ENCODE measurements at regions of chr14 and their contacts with region 1.

Region 1: DNA sequence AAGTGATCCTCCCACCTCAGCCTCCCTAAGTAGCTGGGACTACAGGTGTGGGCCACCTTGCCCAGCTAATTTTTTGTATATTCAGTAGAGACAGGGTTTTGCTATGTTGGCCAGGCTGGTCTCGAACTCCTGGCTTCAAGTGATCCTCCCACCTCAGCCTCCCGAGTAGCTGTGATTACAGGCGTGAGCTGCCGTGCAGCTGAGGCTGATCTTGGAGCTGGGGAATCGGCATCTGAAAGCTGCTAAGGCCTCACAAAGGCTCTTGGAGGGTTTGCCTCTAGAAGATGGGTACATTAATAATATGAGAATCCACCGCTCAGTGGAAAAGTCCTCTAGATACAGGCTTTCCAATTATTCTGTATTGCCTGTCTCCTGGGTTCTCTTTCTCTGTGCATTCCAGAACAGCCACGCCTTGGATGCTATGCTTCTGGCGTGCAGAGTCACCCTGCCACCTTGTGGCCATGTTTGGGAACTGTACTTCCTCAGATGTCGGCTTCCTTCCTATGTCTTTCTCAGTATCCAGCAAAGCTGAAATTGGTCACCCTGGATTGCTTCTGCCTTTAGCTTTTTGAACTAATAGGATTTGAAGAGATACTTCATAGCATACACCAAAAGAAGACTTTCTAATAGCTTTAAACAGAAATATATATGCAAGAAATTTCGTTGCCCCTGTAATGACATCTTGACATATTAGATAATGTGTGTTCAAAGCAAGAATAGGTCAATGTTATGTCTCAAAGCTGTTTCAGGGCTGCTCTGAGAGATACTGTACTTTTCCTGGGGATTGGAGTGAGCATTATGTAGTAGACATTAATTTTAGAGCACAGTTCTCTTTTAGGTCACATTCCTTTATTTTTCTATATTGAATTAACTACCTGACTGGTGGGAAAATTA is 75.4 kb downstream of the SNAPC1 start:
- DNase-seq: peak; percentile 62 to 81
- ATAC-seq: peak; percentile 98

Region 2: DNA sequence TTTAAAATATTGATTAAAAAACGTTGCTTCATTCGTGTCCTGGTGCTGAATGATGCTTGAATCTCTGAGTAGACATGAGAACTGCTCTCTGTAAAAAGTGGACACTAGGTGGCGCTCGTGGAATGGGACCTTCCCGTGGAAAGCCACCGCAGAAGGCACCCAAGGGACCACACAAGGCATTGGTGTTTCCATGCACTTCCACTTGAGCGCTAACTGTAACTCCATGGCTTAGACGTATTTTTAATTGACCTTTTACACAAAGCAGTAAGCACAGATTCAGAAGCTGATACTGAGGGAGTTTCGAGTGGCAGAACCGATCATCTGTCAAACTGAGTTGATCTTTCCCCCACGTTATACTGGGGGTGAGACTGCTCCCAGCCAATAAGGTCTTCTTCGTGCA is 380.9 kb before region 1 on chr14:
- intact Hi-C with region 1: loop called (anchors 5 to 10 kb)
- DNase-seq: peak; percentile 70 to 93
- ATAC-seq: peak; percentile 83

Region 3: DNA sequence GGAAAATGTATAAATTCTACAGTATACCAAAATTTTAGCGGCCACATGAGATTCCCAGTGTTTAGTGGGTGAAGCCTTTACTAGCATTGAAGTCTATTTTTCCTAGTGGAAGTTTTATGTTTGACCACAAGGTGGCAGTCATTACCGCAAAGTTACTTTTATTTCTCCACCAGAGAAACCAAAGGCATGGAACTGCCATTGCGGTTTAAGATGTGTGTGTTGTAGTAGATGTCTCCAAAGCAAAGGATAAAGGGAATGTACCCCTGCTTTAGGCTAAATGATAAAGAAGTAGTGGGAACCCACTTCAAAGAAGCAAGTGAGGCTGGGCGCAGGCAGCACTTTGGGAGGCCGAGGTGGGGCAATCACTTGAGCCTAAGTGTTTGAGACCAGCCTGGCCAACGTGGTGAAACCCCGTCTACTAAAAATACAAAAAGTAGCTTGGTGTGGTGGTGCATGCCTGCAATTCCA is 375.7 kb before region 1 on chr14:
- intact Hi-C with region 1: loop called (anchors 5 to 10 kb)
- DNase-seq: no peak
- ATAC-seq: peak; percentile 76

Region 4: DNA sequence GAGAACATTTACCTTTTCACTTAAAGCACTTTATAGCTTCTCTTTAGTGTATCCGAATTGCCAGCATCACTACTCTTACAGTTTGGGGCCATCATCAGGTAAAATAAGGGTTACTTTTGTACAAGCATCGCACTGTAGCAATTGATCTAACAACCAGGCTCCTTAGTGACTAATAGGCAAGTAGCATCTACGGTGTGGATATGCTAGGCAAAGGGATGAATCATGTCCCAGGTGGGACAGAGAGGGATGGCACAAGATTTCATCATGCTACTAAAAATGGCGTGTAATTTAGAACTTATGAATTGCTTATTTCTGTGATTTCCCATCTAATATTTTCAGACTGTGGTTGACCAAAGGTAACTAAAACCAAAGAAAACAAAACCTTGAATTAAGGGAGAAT is 625.4 kb after region 1 on chr14:
- intact Hi-C with region 1: no loop called
- DNase-seq: no peak
- ATAC-seq: no peak

Measured in left colon (tissue), 2 donors.